Activated CD4-positive, alpha-beta T cell treated with anti-CD3 and anti-CD28 coated beads for 36 hours (primary cell): ENCODE measurements at regions of chr1 and their contacts with region 1.

Region 1: GRCh38 chr1:182143154-182143657 is 81.7 kb upstream of the ZNF648 start:
- DNase-seq: peak; percentile 94
- ATAC-seq: peak; percentile 78
- H3K4me3 Mint-ChIP-seq: no peak overlapping the region
- H3K27ac Mint-ChIP-seq: no peak overlapping the region
- H3K4me1 Mint-ChIP-seq: no peaks in the 10 kb centered on the region
- H3K27me3 Mint-ChIP-seq: peaks cover 4% of the 10 kb centered on the region

Region 2: DNA sequence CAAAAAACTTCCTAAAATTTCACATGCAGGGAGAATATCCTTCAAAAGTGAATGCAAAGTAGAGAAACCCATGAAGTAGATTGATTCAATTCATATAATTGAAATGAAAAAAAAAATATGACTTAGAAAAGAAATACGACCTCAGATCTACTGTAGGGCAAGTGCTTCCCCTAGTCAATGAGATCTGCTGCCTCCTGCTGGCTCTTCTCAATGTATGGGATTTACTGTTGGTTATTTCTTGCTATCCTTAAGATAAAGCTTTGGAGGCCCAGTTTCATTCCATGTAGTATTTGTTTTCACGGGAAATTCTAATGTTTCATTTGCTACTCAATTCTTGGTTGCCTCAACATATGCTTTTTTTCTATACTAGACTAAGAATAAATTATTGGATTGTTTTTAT is 127.8 kb before region 1 on chr1:
- CTCF ChIA-PET with region 1: no interaction called
- POLR2A ChIA-PET with region 1: no interaction called
- intact Hi-C with region 1: no loop called
- DNase-seq: no peak
- ATAC-seq: no peak
- H3K4me3 Mint-ChIP-seq: no peak overlapping the region
- H3K27ac Mint-ChIP-seq: no peak overlapping the region
- H3K4me1 Mint-ChIP-seq: no peaks in the 10 kb centered on the region
- H3K27me3 Mint-ChIP-seq: peaks cover 17% of the 10 kb centered on the region

Region 3: DNA sequence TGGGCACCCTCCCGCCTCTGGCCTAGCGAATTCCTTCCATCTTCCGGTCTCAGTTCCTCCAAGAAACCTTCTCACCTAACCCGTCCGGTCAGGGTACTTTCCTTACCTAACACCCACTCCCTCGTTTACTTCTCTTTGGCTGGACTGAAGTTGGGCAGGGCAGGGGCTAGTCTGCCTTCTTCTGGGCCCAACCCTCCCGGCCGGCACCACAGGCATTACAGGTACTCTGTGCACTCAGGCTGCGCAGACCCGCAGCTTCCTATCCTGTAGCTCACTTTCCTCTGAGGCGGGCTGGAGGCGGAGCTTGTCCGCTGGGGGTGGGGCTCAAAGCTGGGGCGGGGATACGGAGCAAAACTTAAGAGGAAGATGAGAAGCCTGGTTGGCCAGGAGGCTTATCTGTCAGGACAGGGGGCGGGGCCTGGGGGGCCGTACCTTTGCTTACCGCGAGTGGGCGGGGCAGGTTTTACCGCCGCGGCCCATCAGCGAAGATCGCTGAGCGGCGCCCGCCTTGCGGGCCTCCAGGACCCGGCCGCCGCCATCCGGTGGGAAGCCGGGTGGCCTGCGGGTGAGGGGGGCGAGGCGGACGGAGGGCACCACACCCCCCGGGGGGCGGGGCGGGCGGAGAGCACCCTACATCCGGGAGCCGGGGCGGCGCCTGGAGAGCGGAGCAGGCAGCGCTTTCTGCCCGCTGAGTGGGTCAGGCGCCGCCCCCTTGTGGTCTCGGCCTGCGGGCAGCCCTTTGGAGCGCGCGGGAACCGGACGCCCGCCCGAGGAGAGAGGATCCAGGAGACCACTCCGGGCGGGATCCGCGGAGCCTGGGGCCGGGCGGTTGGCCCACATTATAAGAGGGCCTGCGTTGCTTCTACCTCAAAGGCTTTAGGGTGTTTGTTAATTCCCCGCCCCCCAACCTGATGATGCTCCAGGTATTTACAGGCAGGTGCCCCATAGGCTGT is 113.6 kb before region 1 on chr1:
- CTCF ChIA-PET with region 1: no interaction called
- POLR2A ChIA-PET with region 1: no interaction called
- intact Hi-C with region 1: no loop called
- DNase-seq: peak; percentile 99
- ATAC-seq: peak; percentile 96
- H3K4me3 Mint-ChIP-seq: peak overlapping the region; percentile 86
- H3K27ac Mint-ChIP-seq: peak overlapping the region; percentile 97
- H3K4me1 Mint-ChIP-seq: peaks cover 11% of the 10 kb centered on the region
- H3K27me3 Mint-ChIP-seq: no peaks in the 10 kb centered on the region

Region 4: DNA sequence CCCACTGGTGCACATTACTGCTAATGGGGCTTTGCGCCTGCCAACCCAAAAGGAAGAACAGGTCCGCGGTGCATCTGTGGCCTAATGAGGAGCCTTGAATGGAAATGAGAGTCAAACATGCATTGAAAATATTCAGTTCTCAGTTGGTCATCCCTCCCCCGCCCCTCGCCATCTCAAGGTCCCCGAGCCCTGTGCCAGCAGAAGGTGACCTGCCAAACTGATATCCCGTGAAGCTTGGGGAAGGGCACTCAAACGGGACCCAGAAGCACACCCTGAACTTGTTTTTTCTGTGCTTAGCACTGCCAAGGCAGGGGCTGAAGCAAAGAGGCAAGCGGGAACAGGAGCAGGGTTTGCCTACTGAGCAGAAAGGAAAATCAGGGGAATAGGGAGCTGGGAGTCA is 13.8 kb before region 1 on chr1:
- CTCF ChIA-PET with region 1: interaction called, 13 read pairs
- POLR2A ChIA-PET with region 1: no interaction called
- intact Hi-C with region 1: no loop called
- DNase-seq: no peak
- ATAC-seq: no peak
- H3K4me3 Mint-ChIP-seq: no peak overlapping the region
- H3K27ac Mint-ChIP-seq: no peak overlapping the region
- H3K4me1 Mint-ChIP-seq: no peaks in the 10 kb centered on the region
- H3K27me3 Mint-ChIP-seq: no peaks in the 10 kb centered on the region

Region 5: DNA sequence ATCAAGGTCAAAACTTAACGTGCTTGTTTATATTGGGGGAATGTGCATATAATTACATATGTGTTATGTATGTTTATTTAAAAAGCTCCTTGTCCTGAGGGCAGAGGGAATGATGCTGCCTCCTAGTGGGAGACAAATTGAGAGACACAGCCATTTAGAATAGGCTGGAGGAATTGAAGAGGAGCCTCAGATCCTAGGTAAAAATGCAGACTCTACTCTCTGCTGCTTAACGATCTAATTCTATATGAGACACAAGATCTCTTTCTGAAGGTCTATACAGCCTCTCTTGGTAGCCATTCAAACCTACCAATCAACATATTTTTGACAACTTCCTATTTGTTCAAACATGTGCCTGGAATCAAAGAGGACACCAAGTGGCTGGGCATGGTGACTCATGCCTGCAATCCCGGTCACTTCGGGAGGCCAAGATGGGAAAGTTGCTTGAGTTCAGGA is 54.9 kb after region 1 on chr1:
- CTCF ChIA-PET with region 1: interaction called, 12 read pairs
- POLR2A ChIA-PET with region 1: no interaction called
- intact Hi-C with region 1: no loop called
- DNase-seq: no peak
- ATAC-seq: no peak
- H3K4me3 Mint-ChIP-seq: no peak overlapping the region
- H3K27ac Mint-ChIP-seq: no peak overlapping the region
- H3K4me1 Mint-ChIP-seq: no peaks in the 10 kb centered on the region
- H3K27me3 Mint-ChIP-seq: peaks cover 1% of the 10 kb centered on the region

Region 6: DNA sequence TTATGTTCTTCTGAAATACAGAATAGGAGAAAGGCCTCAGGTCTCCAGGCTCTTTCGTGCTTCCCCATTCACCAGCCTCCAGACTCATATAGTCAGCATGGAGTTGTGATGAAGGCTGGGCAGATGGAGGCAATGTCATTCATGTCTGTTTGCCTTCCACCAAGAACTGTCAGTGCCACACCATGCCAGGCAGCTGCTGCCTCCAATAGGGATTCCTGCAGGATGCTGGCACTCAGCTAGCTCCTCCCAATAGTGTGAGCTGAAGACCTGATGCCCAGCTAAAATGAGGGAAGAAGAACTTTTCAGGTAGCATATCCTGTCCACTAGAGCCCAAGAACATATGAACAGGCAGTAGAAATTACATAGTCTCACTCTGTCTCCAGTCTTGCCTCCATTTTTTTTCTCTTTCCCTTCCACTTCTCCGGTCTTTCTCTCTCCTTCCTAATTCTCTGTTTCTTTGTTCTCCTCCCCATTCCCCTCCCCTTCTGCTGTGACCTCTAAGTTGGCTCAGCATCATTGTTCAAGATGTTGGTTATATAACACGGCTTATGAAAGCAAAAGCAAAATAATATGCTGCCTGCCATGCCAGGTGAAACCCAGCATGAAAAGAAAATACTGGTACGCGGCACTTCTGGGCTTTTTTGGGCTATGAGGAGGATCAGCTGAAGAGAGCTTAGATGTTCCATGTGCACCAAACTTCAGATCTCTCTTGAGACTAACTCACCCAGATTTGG is 231.1 kb after region 1 on chr1:
- CTCF ChIA-PET with region 1: interaction called, 11 read pairs
- POLR2A ChIA-PET with region 1: no interaction called
- intact Hi-C with region 1: no loop called
- DNase-seq: no peak
- ATAC-seq: no peak
- H3K4me3 Mint-ChIP-seq: no peak overlapping the region
- H3K27ac Mint-ChIP-seq: no peak overlapping the region
- H3K4me1 Mint-ChIP-seq: no peaks in the 10 kb centered on the region
- H3K27me3 Mint-ChIP-seq: no peaks in the 10 kb centered on the region

Region 7: GRCh38 chr1:182391362-182392044 is 248.3 kb after region 1 on chr1 and contains the start of gene GLUL:
- CTCF ChIA-PET with region 1: interaction called, 223 read pairs
- POLR2A ChIA-PET with region 1: interaction called, 5 read pairs
- intact Hi-C with region 1: loop called (anchors 1 kb)
- DNase-seq: peak; percentile 81
- ATAC-seq: peak; percentile 89
- H3K4me3 Mint-ChIP-seq: peak within 1 kb of the TSS; percentile 86
- H3K27ac Mint-ChIP-seq: peak within 1 kb of the TSS; percentile 80
- H3K4me1 Mint-ChIP-seq: peaks cover 20% of the 10 kb centered on the region
- H3K27me3 Mint-ChIP-seq: peaks cover 13% of the 10 kb centered on the region
- total RNA-seq, gene GLUL: 63.5 to 87.5 TPM

Region 8: GRCh38 chr1:182397771-182398393 is 254.7 kb after region 1 on chr1:
- CTCF ChIA-PET with region 1: interaction called, 223 read pairs
- POLR2A ChIA-PET with region 1: interaction called, 5 read pairs
- intact Hi-C with region 1: loop called (anchors 1 kb)
- DNase-seq: no peak
- ATAC-seq: no peak
- H3K4me3 Mint-ChIP-seq: no peak overlapping the region
- H3K27ac Mint-ChIP-seq: no peak overlapping the region
- H3K4me1 Mint-ChIP-seq: peaks cover 2% of the 10 kb centered on the region
- H3K27me3 Mint-ChIP-seq: peaks cover 6% of the 10 kb centered on the region